GM18951 (cell line): ENCODE measurements at regions of chr9 and their contacts with region 1.

Region 1: GRCh38 chr9:131324736-131325679 is 35.5 kb downstream of the PLPP7 start:
- POLR2A ChIP-seq: no peak

Region 2: GRCh38 chr9:131187957-131188356 is 137.1 kb before region 1 on chr9:
- in situ Hi-C with region 1: loop called (anchors 5 kb)
- POLR2A ChIP-seq: no peak